Lower lobe of right lung (tissue), 2 donors: ENCODE measurements at regions of chr2 and their contacts with region 1.

Region 1: GRCh38 chr2:237060534-237061312 is 25.0 kb upstream of the COPS8 start:
- DNase-seq: no peak
- ATAC-seq: peak; percentile 55 to 80
- H3K4me3 ChIP-seq: no peak overlapping the region
- H3K27ac ChIP-seq: no peak overlapping the region
- H3K4me1 ChIP-seq: peaks cover 6% of the 10 kb centered on the region
- H3K27me3 ChIP-seq: no peaks in the 10 kb centered on the region
- CTCF ChIP-seq: peak; percentile 67

Region 2: GRCh38 chr2:236352761-236353593 is 707.7 kb before region 1 on chr2:
- intact Hi-C with region 1: loop called (anchors 5 kb)
- DNase-seq: no peak
- ATAC-seq: peak in 1 of 2 donors; percentile 62
- H3K4me3 ChIP-seq: no peak overlapping the region
- H3K27ac ChIP-seq: no peak overlapping the region
- H3K4me1 ChIP-seq: no peaks in the 10 kb centered on the region
- H3K27me3 ChIP-seq: no peaks in the 10 kb centered on the region
- CTCF ChIP-seq: peak; percentile 81